ENCODE measurements at regions of chr12 and their contacts with region 1.

Region 1: DNA sequence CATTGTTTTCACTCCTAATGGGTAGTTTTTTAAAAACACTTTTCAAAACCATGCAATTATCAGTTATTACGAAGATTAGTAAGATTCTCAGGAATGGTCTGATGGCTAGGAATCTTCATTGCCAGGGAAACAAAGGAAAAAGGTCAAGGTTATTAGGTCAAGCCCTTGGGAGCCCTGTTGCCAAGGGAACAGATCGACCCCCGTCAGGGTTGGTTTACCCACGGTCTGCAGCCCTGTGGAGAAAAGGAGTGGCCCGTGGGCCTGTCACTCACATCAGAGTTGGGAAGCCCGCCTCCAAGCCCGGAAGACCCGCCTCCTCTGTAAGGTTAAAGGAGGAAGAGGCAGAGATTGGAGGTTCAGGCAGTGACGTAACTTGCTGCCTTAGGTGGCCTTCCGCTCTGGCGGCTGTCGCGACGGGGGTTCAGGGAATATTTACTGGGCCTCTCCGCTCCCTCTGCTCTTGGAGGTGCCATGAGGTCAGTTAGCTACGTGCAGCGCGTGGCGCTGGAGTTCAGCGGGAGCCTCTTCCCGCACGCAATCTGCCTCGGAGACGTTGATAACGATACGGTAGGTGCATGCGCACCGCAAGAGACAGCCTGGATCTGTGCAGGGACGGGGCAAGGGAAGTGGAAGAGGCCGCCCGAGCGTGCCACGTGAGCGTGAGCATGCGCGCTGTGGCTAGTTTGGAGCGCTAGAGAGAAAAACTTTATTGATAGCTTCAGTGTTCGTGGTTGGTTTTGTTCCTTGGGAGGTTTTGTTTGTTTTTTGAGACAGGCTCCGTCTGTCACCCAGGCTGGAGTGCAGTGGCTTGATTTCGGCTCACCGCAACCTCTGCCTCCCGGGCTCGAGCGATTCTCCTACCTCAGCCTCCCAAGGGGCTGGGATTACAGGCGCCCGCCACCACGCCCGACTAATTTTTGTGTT is at the start of gene ITFG2:
- DNase-seq: peak; percentile 94 to 98 (median 96)
- H3K4me3 ChIP-seq: peak within 1 kb of the TSS; percentile 87
- H3K4me3 Mint-ChIP-seq: peak within 1 kb of the TSS; percentile 98 to 100 (median 100)
- H3K27ac ChIP-seq: peak within 1 kb of the TSS; percentile 91
- H3K27ac Mint-ChIP-seq: peak within 1 kb of the TSS; percentile 97 to 100 (median 100)
- H3K4me1 ChIP-seq: peaks cover 28% of the 10 kb centered on the region
- H3K4me1 Mint-ChIP-seq: peaks cover 37 to 46% (median 45%) of the 10 kb centered on the region in 3 donors
- H3K27me3 ChIP-seq: no peaks in the 10 kb centered on the region
- H3K27me3 Mint-ChIP-seq: peaks cover 0 to 2% of the 10 kb centered on the region in 2 donors
- total RNA-seq, gene ITFG2: 36.9 to 39.3 TPM

Region 2: GRCh38 chr12:2691006-2691344 is 121.6 kb before region 1 on chr12:
- CTCF ChIA-PET with region 1: interaction called, 12 read pairs
- POLR2A ChIA-PET with region 1: interaction called, 3 read pairs
- DNase-seq: peak; percentile 43 to 79 (median 64)
- H3K4me3 ChIP-seq: peak overlapping the region; percentile 63
- H3K4me3 Mint-ChIP-seq: peak overlapping the region; percentile 89 to 98 (median 94)
- H3K27ac ChIP-seq: peak overlapping the region; percentile 65
- H3K27ac Mint-ChIP-seq: peak overlapping the region; percentile 86 to 99 (median 94)
- H3K4me1 ChIP-seq: peaks cover 26% of the 10 kb centered on the region
- H3K4me1 Mint-ChIP-seq: peaks cover 42 to 55% (median 52%) of the 10 kb centered on the region in 3 donors
- H3K27me3 ChIP-seq: no peaks in the 10 kb centered on the region
- H3K27me3 Mint-ChIP-seq: peaks cover 7 to 10% of the 10 kb centered on the region in 2 donors

Region 3: GRCh38 chr12:2794736-2795289 is 17.7 kb before region 1 on chr12 and contains the start of gene FKBP4:
- CTCF ChIA-PET with region 1: interaction called, 15 read pairs
- POLR2A ChIA-PET with region 1: interaction called, 22 read pairs
- DNase-seq: peak; percentile 84 to 91 (median 86)
- H3K4me3 ChIP-seq: peak within 1 kb of the TSS; percentile 66
- H3K4me3 Mint-ChIP-seq: peak within 1 kb of the TSS; percentile 89 to 99 (median 91)
- H3K27ac ChIP-seq: peak within 1 kb of the TSS; percentile 18
- H3K27ac Mint-ChIP-seq: peak within 1 kb of the TSS; percentile 66 to 92 (median 78)
- H3K4me1 ChIP-seq: peaks cover 21% of the 10 kb centered on the region
- H3K4me1 Mint-ChIP-seq: peaks cover 14 to 24% (median 21%) of the 10 kb centered on the region in 3 donors
- H3K27me3 ChIP-seq: no peaks in the 10 kb centered on the region
- H3K27me3 Mint-ChIP-seq: no peaks in the 10 kb centered on the region
- total RNA-seq, gene FKBP4: 172 to 183 TPM

Region 4: DNA sequence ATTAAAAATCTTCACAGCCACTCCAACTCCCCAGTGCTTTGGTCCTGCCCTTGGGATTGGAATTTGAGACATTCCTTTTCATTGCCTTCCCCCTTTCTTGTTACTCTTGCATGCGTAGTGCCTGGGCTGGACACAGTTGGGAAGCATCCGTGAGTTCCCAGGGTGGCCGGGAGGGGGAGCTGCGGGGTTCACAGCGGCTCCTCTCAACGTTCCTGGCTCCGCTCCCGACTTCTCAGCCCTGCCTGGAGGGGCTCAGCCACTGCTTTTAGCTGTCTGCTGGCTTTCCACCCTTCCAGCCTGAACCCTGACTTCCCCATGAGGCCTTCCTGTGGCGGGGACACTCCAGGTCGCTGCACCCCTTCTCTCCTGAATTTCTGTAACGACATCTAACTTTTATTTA is 41.1 kb after region 1 on chr12:
- CTCF ChIA-PET with region 1: no interaction called
- POLR2A ChIA-PET with region 1: no interaction called
- DNase-seq: peak in 3 of 5 donors; percentile 7 to 17 (median 12)
- H3K4me3 ChIP-seq: no peak overlapping the region
- H3K4me3 Mint-ChIP-seq: no peak overlapping the region
- H3K27ac ChIP-seq: no peak overlapping the region
- H3K27ac Mint-ChIP-seq: no peak overlapping the region
- H3K4me1 ChIP-seq: no peaks in the 10 kb centered on the region
- H3K4me1 Mint-ChIP-seq: no peaks in the 10 kb centered on the region
- H3K27me3 ChIP-seq: no peaks in the 10 kb centered on the region
- H3K27me3 Mint-ChIP-seq: no peaks in the 10 kb centered on the region

Region 5: DNA sequence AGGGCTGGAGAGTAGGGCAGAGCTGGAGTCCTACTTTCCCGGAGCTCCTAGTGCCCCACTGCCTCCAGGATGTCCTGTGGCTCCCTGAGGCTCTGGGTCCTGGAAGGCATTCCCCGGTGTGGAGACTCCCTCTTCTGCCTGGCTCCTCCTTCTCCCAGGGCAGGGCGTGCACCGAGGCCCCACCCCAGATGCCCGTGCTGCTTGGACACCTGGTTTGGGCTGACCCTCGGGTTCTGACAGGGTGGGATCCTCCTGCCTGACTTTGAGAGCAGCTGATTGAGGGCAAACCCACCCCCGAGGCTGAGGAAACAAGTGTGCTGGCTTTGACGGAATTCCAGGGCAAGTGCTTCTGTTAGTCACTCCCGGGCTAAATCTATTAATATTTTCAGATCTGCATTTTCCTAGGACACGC is 162.0 kb after region 1 on chr12:
- CTCF ChIA-PET with region 1: no interaction called
- POLR2A ChIA-PET with region 1: no interaction called
- DNase-seq: peak in 1 of 5 donors; percentile 26
- H3K4me3 ChIP-seq: no peak overlapping the region
- H3K4me3 Mint-ChIP-seq: no peak overlapping the region
- H3K27ac ChIP-seq: no peak overlapping the region
- H3K27ac Mint-ChIP-seq: no peak overlapping the region
- H3K4me1 ChIP-seq: no peaks in the 10 kb centered on the region
- H3K4me1 Mint-ChIP-seq: no peaks in the 10 kb centered on the region
- H3K27me3 ChIP-seq: no peaks in the 10 kb centered on the region
- H3K27me3 Mint-ChIP-seq: peaks cover 1 to 13% of the 10 kb centered on the region in 2 donors

Measured in CD8-positive, alpha-beta memory T cell (primary cell).